ENCODE measurements at regions of chr3 and their contacts with region 1.

Region 1: GRCh38 chr3:101573449-101574387 is at the start of gene PCNP:
- DNase-seq: peak; percentile 95 to 99 (median 99)
- ATAC-seq: peak; percentile 74 to 75
- H3K4me3 Mint-ChIP-seq: peak within 1 kb of the TSS; percentile 86 to 100 (median 96)
- H3K27ac Mint-ChIP-seq: peak within 1 kb of the TSS; percentile 95 to 100 (median 99)
- H3K4me1 Mint-ChIP-seq: peaks cover 32 to 75% (median 69%) of the 10 kb centered on the region in 4 donors
- H3K27me3 Mint-ChIP-seq: no peaks in the 10 kb centered on the region
- polyA plus RNA-seq, gene PCNP: 112 to 130 (median 124) TPM

Region 2: DNA sequence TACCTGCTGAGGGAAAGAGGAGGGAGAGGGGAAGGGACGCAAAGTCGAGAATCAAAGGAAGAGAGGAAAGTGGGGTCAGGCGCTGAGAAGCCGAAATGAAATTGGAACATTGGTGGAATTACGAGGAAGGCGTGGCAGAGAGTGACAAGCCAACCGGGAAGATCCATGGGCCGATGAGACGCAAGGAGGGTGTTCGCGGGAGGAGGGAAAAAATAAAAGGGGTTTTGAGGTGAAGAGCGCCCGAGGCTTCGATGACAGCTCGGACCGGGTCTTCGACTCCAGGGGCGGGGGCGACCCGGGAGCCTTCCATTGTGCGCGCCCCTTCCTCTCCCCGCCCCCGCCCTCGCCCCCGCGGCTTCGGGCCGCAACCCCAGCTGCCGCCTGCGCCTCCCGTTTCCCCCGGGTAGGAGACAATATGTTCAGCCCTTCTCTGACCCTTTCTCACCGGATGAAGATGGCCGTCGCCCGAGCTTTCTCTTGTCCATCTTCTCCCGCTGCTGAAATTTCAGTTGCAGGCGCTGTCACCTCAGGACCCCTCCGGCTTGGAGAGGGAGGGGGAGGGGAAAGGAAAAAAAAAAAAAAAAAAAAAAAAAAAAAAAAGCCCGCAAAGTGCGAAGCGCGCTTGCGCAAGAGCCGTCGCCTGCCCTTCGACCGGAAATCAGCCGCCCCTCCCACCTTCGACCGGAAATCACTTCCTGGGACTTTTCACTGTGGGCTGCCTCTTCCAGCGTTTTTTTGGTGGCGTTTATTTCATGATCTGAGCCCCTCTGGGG is 60.9 kb before region 1 on chr3 and contains the start of gene SENP7:
- POLR2A ChIA-PET with region 1: interaction called, 26 read pairs
- DNase-seq: peak; percentile 56 to 85 (median 74)
- ATAC-seq: peak; percentile 69 to 75
- H3K4me3 Mint-ChIP-seq: peak within 1 kb of the TSS; percentile 97 to 100 (median 100)
- H3K27ac Mint-ChIP-seq: peak within 1 kb of the TSS; percentile 94 to 100 (median 98)
- H3K4me1 Mint-ChIP-seq: peaks cover 25 to 60% (median 50%) of the 10 kb centered on the region in 4 donors
- H3K27me3 Mint-ChIP-seq: peaks cover 0 to 8% (median 0%) of the 10 kb centered on the region in 5 donors
- polyA plus RNA-seq, gene SENP7: 6.7 to 11.2 (median 9.3) TPM

Region 3: GRCh38 chr3:101518421-101518871 is 55.3 kb before region 1 on chr3:
- POLR2A ChIA-PET with region 1: interaction called, 26 read pairs
- DNase-seq: peak in 7 of 10 donors; percentile 14 to 66 (median 35)
- ATAC-seq: peak; percentile 71 to 88
- H3K4me3 Mint-ChIP-seq: peak overlapping the region in 9 of 10 donors; percentile 1 to 65 (median 49)
- H3K27ac Mint-ChIP-seq: peak overlapping the region; percentile 38 to 94 (median 88)
- H3K4me1 Mint-ChIP-seq: peaks cover 21 to 54% (median 50%) of the 10 kb centered on the region in 4 donors
- H3K27me3 Mint-ChIP-seq: peaks cover 0 to under 1% (median 0%) of the 10 kb centered on the region in 5 donors

Region 4: GRCh38 chr3:101544161-101544850 is 29.4 kb before region 1 on chr3:
- POLR2A ChIA-PET with region 1: interaction called, 16 read pairs
- DNase-seq: no peak
- ATAC-seq: peak in 1 of 2 donors; percentile 44
- H3K4me3 Mint-ChIP-seq: peak overlapping the region in 6 of 10 donors; percentile 20 to 37 (median 28)
- H3K27ac Mint-ChIP-seq: peak overlapping the region in 9 of 10 donors; percentile 63 to 90 (median 81)
- H3K4me1 Mint-ChIP-seq: peaks cover 14 to 33% (median 29%) of the 10 kb centered on the region in 4 donors
- H3K27me3 Mint-ChIP-seq: no peaks in the 10 kb centered on the region

Region 5: GRCh38 chr3:101561630-101562328 is 11.9 kb before region 1 on chr3 and contains the start of gene TRMT10C:
- POLR2A ChIA-PET with region 1: interaction called, 41 read pairs
- DNase-seq: peak; percentile 81 to 95 (median 92)
- ATAC-seq: peak; percentile 95 to 96
- H3K4me3 Mint-ChIP-seq: peak within 1 kb of the TSS; percentile 92 to 100 (median 98)
- H3K27ac Mint-ChIP-seq: peak within 1 kb of the TSS; percentile 95 to 99 (median 98)
- H3K4me1 Mint-ChIP-seq: peaks cover 21 to 39% (median 30%) of the 10 kb centered on the region in 4 donors
- H3K27me3 Mint-ChIP-seq: peaks cover 0 to 5% (median under 1%) of the 10 kb centered on the region in 5 donors
- polyA plus RNA-seq, gene TRMT10C: 34.1 to 52.7 (median 36.7) TPM

Region 6: DNA sequence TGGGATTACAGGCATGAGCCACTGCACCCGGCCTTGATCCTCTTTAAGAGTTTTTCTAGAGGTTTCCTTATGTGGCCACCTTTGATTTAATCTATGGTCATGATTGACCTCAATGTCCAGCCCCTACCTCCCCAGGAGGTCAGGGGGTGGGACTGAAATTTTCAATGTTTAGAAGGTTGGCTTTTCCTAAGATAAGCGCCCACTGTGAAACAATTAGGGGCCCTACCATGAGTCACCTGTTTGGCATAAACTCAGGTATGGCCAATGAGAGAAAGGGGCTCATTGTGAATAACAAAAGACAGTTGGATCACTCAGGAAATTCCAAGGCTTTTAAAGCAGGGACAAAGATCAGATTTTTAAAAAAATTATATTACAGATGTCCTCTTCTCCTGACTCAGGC is 52.2 kb after region 1 on chr3:
- POLR2A ChIA-PET with region 1: no interaction called
- DNase-seq: no peak
- ATAC-seq: no peak
- H3K4me3 Mint-ChIP-seq: no peak overlapping the region
- H3K27ac Mint-ChIP-seq: no peak overlapping the region
- H3K4me1 Mint-ChIP-seq: no peaks in the 10 kb centered on the region
- H3K27me3 Mint-ChIP-seq: no peaks in the 10 kb centered on the region

Region 7: DNA sequence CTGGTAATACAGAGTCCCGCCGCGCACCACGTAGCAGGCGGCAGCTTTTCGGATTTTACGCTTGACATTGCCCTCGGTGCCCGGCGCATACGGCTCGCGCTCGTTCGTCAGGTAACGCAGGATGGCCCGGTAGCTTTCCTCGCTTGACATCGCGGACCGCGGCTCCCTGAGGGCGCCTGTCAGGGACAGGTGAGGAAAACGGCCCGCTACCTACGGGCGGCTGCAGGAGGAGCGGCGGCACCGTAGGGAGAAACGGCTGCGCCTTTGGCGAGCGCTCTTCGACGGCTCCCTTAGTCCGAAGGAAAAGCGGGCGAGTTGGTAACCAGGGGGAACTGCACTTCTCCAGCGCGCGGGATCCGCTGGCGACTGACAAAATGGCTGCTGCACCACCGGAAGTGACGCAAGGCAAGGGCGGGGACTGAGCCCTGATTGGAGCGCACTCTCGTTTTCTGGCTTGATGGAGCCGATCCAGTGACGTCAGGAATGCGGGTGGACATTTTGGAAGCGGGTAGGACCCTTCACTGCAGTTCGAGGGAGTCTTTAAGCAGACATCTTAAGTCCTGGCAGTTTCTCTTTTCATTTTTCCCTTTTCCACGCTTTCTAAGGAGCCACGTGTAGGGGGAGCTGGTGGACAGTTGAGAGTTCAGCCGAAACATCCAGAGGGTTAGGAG is 103.2 kb after region 1 on chr3 and contains the start of gene ZBTB11:
- POLR2A ChIA-PET with region 1: interaction called, 68 read pairs
- DNase-seq: peak; percentile 97 to 100 (median 100)
- ATAC-seq: peak; percentile 69 to 71
- H3K4me3 Mint-ChIP-seq: peak within 1 kb of the TSS; percentile 92 to 99 (median 96)
- H3K27ac Mint-ChIP-seq: peak within 1 kb of the TSS; percentile 94 to 99 (median 99)
- H3K4me1 Mint-ChIP-seq: peaks cover 15 to 54% (median 48%) of the 10 kb centered on the region in 4 donors
- H3K27me3 Mint-ChIP-seq: peaks cover 0 to 2% (median 0%) of the 10 kb centered on the region in 5 donors
- polyA plus RNA-seq, gene ZBTB11: 8.6 to 10.9 (median 9.5) TPM

Region 8: GRCh38 chr3:101685870-101686412 is 112.2 kb after region 1 on chr3:
- POLR2A ChIA-PET with region 1: interaction called, 36 read pairs
- DNase-seq: no peak
- ATAC-seq: peak; percentile 8 to 11
- H3K4me3 Mint-ChIP-seq: peak overlapping the region; percentile 87 to 100 (median 100)
- H3K27ac Mint-ChIP-seq: peak overlapping the region; percentile 97 to 100 (median 100)
- H3K4me1 Mint-ChIP-seq: peaks cover 16 to 67% (median 46%) of the 10 kb centered on the region in 4 donors
- H3K27me3 Mint-ChIP-seq: no peaks in the 10 kb centered on the region

Measured in naive thymus-derived CD8-positive, alpha-beta T cell (primary cell).